ENCODE measurements at regions of chr14 and their contacts with region 1.

Region 1: GRCh38 chr14:53539489-53540126 is 386.5 kb upstream of the DDHD1 start:
- DNase-seq: peak; percentile 59 to 87 (median 80)
- ATAC-seq: peak; percentile 83
- H3K4me3 ChIP-seq: no peak overlapping the region
- H3K4me1 ChIP-seq: no peaks in the 10 kb centered on the region
- CTCF ChIP-seq: peak; percentile 40

Region 2: DNA sequence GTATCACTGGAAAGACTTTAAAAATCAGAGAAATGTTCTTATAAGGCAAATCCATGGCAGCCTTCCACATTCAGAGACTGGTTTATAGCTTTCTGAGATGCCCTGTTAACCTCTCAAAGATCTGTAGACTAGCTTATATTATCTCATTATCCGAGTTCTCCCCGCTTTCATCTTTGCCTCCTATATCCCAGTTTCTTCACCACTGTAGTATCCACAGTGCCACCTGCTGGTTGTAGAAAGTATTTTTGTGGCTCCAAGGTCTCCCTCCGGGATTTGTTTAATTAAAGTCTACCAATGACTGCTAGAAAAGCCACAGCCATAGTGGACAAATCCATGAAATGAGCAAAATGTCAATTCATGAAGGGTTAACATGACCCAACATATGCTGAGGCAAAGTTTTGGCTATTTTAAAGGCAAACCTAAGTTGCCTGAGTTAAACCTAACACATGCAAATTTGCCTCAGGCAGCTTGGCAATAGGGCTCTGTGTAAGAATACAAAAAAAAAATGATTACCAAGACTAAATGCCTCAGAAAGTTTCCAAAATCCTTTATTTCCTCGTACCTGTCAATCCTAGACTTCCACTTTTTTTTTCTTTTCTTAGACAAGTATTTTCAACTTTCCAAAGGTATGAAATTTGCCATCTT is 635.8 kb after region 1 on chr14:
- intact Hi-C with region 1: loop called (anchors 5 to 10 kb)
- DNase-seq: peak in 1 of 3 donors; percentile 87
- ATAC-seq: peak; percentile 77
- H3K4me3 ChIP-seq: no peak overlapping the region
- H3K4me1 ChIP-seq: peaks cover 16% of the 10 kb centered on the region
- CTCF ChIP-seq: peak; percentile 55

Region 3: DNA sequence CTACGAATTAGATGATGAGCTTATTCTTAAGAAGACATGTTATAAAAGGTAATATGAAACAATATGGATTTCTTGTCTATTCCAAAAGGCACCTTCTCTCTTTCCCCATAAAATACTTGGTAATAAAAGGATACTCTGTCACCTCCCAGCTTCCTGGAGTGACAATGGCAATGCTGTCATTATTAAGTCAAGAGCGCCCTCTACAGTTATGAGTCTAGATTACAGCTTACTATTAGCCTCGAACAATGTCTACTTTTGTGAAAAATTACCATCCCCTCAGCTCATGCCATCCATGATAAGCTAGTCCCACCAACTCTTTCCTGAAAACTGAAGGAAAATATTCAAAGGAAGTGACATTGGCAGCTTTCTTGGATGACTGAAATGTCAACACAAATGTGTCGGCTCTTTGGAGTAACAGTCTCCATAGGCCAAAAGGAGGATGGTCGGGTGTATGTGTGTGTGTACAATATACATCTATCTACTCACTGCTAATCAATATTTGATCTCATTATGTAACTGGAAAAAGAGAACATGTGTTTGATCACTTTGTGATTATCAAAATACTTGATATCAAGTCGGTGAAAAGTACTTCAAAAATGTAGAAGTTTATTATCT is 808.5 kb after region 1 on chr14:
- intact Hi-C with region 1: loop called in 1 of 2 experiments (anchors 1 kb)
- DNase-seq: peak in 1 of 3 donors; percentile 61
- ATAC-seq: peak; percentile 90
- H3K4me3 ChIP-seq: no peak overlapping the region
- H3K4me1 ChIP-seq: peaks cover 8% of the 10 kb centered on the region
- CTCF ChIP-seq: peak; percentile 35

Measured in mucosa of descending colon (tissue), 3 donors.